AG04449 (cell line): ENCODE measurements at regions of chr14 and their contacts with region 1.

Region 1: DNA sequence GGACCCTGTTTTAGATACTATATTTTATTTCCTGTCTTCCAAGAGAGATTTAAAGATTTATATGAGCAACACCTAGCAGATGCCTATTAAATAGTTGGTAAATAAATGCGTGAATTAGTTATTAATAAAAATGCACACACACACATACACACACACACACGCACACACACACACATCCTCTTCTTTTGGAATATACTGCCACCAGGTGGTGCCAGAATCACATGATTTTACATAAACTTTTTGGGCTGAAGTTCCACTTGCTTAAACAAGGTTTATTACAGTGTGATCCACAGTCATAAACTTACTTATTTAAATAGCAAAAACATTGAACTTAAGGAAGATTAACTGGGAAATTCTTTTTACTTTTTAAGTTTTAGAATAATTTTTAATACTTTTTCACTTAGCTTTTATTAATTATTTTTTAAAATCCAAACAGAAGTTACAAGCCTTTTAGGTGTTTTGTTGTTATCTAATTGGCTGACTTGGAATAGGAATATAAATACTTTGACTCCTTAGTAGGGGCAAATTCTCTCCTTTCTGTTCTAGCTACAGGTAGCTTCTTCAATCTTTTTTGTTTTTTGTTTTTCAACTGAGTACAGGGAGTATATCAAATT is 17.5 kb downstream of the RAD51B start:
- DNase-seq: peak; percentile 54
- H3K4me3 ChIP-seq: no peak overlapping the region
- CTCF ChIP-seq: peak; percentile 64

Region 2: DNA sequence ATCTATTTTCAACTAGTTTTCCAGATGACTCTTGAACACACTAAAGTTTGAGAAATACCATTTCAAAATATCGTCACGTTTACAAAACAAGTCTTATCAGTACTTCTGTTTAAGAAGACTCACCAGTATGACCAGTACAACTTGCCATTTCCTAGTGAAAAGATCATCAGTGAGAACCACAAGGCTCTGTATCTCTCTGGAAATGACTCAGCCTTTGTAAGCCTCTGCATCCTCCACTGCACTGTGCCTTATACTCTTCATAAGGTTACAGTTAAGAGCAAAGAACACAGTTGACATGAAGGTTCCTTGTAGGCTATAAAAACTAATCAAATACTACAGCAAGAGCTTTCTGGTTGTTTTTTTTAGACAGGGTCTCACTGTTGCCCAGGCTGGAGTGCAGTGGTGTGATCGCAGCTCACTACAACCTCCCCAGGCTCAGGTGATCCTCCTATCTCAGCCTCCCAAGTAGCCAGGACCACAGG is 157.0 kb before region 1 on chr14:
- CTCF ChIA-PET with region 1: no interaction called
- POLR2A ChIA-PET with region 1: no interaction called
- DNase-seq: peak; percentile 71
- H3K4me3 ChIP-seq: no peak overlapping the region
- CTCF ChIP-seq: no peak

Region 3: GRCh38 chr14:67695394-67695949 is 141.6 kb before region 1 on chr14 and contains the start of gene RDH11:
- CTCF ChIA-PET with region 1: no interaction called
- POLR2A ChIA-PET with region 1: no interaction called
- DNase-seq: no peak
- H3K4me3 ChIP-seq: peak within 1 kb of the TSS; percentile 94
- CTCF ChIP-seq: no peak

Region 4: GRCh38 chr14:67850066-67850830 is 13.1 kb after region 1 on chr14:
- CTCF ChIA-PET with region 1: interaction called, 12 read pairs
- POLR2A ChIA-PET with region 1: no interaction called
- DNase-seq: no peak
- H3K4me3 ChIP-seq: no peak overlapping the region
- CTCF ChIP-seq: no peak

Region 5: DNA sequence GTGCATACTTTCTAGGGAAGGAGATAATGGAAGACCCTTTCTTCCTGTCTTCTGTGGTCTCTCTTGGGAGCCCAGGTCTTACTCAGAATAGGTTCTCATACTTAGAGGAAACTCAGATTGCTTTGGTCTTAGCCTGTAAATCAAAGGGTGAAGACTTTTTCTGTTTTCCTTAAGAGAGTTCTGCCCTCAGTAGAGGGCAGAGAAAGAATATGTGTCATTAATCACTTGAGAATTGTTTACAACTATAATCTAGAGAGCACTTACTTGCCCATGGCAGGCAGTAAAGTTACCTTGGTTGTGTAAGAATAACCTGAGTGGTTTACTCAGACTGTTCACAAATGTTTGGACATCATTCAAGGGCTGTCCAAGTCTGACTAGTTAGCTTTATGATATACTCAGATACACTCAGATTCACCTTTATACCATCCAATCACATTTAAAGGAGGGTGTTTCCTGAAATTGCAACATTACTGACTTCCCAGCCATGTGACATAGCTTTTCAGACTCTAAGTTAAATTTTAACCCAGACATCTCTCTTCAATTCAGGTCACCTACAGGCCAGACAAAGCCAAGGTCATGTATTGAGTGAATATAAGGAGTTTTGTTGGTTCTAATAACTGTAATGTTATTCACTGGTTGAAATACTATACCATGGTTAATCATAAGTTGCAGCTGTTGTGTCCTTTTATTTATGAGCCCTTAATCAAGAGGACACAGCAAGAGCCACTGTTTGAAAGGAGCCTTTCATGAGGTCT is 354.6 kb after region 1 on chr14:
- CTCF ChIA-PET with region 1: no interaction called
- POLR2A ChIA-PET with region 1: no interaction called
- DNase-seq: no peak
- H3K4me3 ChIP-seq: no peak overlapping the region
- CTCF ChIP-seq: no peak